Activated T-helper 2 cell treated with anti-CD3 and anti-CD28 coated beads, Interferon-gamma antibody, Interleukin-2, Interleukin-4, amounts not matched to agents 10 μg/mL and 5 μg/mL and 100 μg/mL, durations not matched to agents 14 hours and 24 hours and 36 hours (primary cell): ENCODE measurements at regions of chr20 and their contacts with region 1.

Region 1: GRCh38 chr20:43749734-43750294 is 23.0 kb upstream of the GTSF1L start:
- DNase-seq: peak; percentile 71
- H3K4me3 Mint-ChIP-seq: no peak overlapping the region
- H3K27ac Mint-ChIP-seq: peak overlapping the region; percentile 72
- H3K4me1 Mint-ChIP-seq: peaks cover 46% of the 10 kb centered on the region
- H3K27me3 Mint-ChIP-seq: no peaks in the 10 kb centered on the region

Region 2: GRCh38 chr20:43456809-43457639 is 292.8 kb before region 1 on chr20:
- intact Hi-C with region 1: loop called (anchors 1 kb)
- DNase-seq: peak; percentile 85
- H3K4me3 Mint-ChIP-seq: peak overlapping the region; percentile 88
- H3K27ac Mint-ChIP-seq: peak overlapping the region; percentile 99
- H3K4me1 Mint-ChIP-seq: peaks cover 22% of the 10 kb centered on the region
- H3K27me3 Mint-ChIP-seq: peaks cover 5% of the 10 kb centered on the region

Region 3: DNA sequence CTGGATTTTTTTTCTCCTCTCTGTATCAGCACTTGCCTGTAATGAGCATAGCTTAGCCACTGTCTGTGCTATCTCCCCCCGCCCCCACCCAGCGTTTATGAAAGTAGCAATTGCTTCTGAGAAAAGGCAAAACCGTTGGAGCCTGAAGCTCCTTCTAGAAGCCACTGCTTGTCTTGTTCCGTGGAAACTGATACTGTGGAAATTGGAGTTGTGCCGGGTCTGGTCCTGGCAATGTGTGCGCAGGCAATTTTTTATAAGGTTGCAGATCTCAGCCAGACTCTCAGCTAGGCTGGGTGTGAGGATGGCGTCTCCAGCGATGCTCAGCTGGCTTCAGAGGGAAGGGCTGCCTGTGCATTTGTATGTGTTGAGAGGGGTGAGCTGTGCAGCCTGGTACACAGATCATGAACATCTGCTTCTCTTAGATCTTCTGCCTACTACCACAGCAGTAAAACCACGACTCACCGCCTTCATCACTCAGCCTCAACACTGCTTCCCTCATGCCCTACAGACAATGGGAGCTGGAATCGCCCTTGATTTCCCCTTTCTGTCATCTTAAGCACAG is 49.4 kb after region 1 on chr20:
- intact Hi-C with region 1: loop called (anchors 2 kb)
- DNase-seq: no peak
- H3K4me3 Mint-ChIP-seq: peak overlapping the region; percentile 28
- H3K27ac Mint-ChIP-seq: peak overlapping the region; percentile 74
- H3K4me1 Mint-ChIP-seq: peaks cover 28% of the 10 kb centered on the region
- H3K27me3 Mint-ChIP-seq: no peaks in the 10 kb centered on the region

Region 4: DNA sequence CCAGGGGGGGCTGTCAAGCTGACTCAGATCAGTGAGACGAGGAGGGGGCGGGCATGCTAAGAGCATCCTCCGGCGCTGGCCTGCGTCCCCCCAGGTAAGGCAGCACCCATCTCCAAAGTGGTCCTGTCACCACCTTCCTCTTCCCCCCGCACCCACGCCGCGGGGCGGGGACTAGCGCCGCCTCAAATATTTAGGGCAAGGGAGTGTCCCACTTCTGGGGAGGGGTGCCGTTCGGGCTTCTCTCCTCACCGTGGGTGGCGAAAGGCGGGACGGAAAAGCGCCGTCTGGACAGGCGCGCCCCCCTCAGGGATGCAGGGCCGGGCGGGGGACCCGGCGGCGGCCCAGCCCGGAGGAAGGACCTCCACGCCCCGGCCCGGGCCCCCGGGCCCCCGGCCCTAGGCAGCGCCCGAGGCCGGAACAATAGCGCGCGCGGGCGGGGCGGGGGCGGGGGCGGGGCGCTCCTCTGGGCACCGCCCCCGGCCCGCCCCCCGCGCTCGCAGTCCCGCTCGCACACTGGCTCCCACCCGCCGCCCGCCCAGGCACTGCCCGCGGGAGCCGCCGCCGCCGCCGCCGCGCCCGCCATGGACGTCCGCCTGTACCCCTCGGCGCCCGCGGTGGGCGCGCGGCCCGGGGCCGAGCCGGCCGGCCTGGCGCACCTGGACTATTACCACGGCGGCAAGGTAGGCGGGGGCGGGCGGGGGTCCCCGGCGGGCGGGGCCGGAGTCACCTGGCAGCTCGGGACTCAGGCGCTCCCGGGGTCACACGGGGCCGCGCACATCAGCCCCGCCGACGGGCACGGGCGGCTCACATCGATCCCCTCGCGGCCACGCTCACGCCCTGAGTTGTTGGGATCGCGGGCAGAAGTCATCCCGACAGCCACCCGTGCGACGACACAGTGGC is 164.7 kb after region 1 on chr20 and contains the start of gene TOX2:
- intact Hi-C with region 1: loop called (anchors 2 kb)
- DNase-seq: peak; percentile 40
- H3K4me3 Mint-ChIP-seq: peak within 1 kb of the TSS; percentile 82
- H3K27ac Mint-ChIP-seq: peak within 1 kb of the TSS; percentile 62
- H3K4me1 Mint-ChIP-seq: peaks cover 32% of the 10 kb centered on the region
- H3K27me3 Mint-ChIP-seq: peaks cover 46% of the 10 kb centered on the region
- total RNA-seq, gene TOX2: 2.4 and 3.0 TPM in 2 replicates

Region 5: GRCh38 chr20:44028868-44029847 is 279.3 kb after region 1 on chr20:
- intact Hi-C with region 1: loop called (anchors 2 kb)
- DNase-seq: peak; percentile 35
- H3K4me3 Mint-ChIP-seq: peak overlapping the region; percentile 49
- H3K27ac Mint-ChIP-seq: peak overlapping the region; percentile 10
- H3K4me1 Mint-ChIP-seq: peaks cover 49% of the 10 kb centered on the region
- H3K27me3 Mint-ChIP-seq: peaks cover 51% of the 10 kb centered on the region